ENCODE measurements at regions of chr12 and their contacts with region 1.

Region 1: DNA sequence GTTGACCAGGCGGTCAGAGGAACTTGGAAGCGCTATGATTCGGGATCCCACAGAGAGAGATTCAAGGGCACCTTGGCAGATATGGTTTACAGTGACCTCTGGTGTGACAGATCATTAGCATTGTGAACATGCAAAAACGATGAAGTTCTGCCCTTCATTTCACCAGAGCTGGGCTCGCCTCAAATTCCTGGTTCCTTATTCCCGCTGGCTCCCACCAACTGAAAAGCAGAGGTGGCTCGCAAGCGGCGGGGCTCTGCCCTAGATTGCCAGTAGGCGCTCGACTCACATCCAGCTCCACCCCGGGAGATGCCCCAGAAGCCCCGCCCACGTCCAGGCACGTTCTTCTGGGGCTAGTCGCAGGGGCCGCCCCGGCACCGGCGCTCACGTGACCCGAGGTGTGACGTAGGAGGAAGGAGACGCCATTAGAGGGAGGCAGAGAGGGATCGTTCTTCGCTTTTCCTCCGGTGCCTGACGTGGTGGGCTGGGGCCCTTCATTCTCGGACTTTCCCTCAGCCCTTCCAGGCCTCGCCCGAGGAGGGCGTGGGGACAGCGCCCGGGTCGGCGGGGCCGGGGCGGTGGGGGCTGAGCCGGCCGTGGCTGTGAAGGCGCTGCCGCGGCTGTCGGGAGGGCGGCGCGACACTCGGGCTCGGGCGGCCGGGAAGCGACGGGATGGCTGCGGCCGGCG is at the start of gene RAB21:
- DNase-seq: peak; percentile 99
- H3K4me3 ChIP-seq: peak within 1 kb of the TSS; percentile 76 to 93 (median 84)
- H3K27ac ChIP-seq: peak within 1 kb of the TSS; percentile 93 to 99 (median 96)
- H3K4me1 ChIP-seq: peaks cover 9 to 42% (median 37%) of the 10 kb centered on the region in 4 donors
- H3K27me3 ChIP-seq: peaks cover 0 to 3% (median 0%) of the 10 kb centered on the region in 4 donors
- CTCF ChIP-seq: peak; percentile 29 to 51 (median 29)
- EP300 ChIP-seq: no peak
- POLR2A ChIP-seq: peak; percentile 93
- total RNA-seq, gene RAB21: 15.0 to 36.9 (median 31.7) TPM

Region 2: GRCh38 chr12:71465796-71466195 is 288.8 kb before region 1 on chr12:
- intact Hi-C with region 1: no loop called
- DNase-seq: no peak
- H3K4me3 ChIP-seq: no peak overlapping the region
- H3K27ac ChIP-seq: no peak overlapping the region
- H3K4me1 ChIP-seq: no peaks in the 10 kb centered on the region
- H3K27me3 ChIP-seq: no peaks in the 10 kb centered on the region
- CTCF ChIP-seq: no peak
- EP300 ChIP-seq: no peak
- POLR2A ChIP-seq: no peak

Region 3: DNA sequence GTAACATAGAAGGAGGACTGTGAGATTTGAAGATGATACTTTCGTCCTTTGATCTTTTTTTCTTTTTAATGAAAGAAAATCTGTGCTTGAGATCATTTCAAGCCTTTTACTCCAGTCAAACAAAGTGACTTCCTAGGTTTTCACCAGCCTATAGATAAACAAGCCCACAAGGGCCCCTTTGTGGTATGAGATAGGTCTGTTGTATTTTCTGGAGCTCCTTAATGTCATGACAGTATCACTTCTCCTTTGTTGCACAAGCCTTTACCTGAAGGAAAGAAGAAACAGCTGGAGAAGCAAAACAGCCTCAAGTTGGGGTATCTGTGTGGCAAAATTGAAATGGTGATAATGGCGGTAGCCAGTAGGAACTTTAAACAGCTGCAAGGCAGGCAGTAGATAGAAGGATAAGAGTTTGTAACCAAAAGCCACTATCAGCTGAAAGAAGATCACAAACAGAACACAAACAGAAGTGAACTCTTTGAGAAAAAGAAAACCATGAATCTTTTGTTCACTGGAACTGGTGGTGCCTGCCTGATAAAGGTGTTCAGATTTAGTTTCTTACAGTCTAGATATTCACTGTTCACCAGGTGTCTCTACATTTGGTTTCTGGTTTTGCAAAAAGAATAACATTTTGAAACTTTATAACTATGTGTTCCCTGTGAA is 218.2 kb before region 1 on chr12:
- intact Hi-C with region 1: no loop called
- DNase-seq: no peak
- H3K4me3 ChIP-seq: no peak overlapping the region
- H3K27ac ChIP-seq: no peak overlapping the region
- H3K4me1 ChIP-seq: no peaks in the 10 kb centered on the region
- H3K27me3 ChIP-seq: no peaks in the 10 kb centered on the region
- CTCF ChIP-seq: no peak
- EP300 ChIP-seq: no peak
- POLR2A ChIP-seq: no peak

Region 4: GRCh38 chr12:71626098-71626497 is 128.5 kb before region 1 on chr12:
- intact Hi-C with region 1: no loop called
- DNase-seq: no peak
- H3K4me3 ChIP-seq: no peak overlapping the region
- H3K27ac ChIP-seq: no peak overlapping the region
- H3K4me1 ChIP-seq: no peaks in the 10 kb centered on the region
- H3K27me3 ChIP-seq: no peaks in the 10 kb centered on the region
- CTCF ChIP-seq: no peak
- EP300 ChIP-seq: no peak
- POLR2A ChIP-seq: no peak

Region 5: DNA sequence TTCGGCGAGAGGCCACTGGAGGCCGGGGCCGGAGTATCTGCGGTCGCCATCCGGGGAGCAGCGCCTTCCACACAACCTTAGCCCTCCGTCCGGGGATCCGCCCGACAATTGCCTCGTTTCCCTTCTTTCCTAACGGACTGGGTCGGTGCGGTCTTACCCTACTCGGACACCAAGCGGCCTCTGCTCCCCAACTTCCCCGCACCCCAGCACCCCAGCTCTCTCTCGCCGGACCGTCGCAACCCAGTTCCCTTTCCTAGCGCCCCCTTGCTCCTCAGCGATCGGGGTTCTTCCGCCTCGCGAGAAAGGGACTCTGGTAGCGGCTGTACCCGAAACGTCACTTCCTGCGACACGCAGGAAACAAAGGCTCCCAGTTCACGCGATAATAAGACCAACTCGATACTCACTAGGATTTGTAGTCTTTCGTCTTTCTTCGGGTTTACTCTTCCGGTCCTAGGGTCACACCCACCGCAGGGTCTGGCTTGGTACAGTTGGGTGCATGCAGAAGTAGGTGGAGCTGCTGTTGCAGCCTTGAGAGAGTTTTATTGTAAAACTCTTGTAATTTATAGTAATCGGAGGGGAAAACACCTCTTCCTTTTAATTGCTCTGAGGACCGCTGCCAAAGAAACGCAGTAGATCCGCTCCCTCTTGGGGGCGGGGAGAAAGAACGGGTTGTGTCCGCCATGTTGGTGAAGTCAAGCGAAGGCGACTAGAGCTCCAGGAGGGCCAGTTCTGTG is 90.9 kb before region 1 on chr12 and contains the start of gene ZFC3H1:
- intact Hi-C with region 1: loop called (anchors 10 kb)
- DNase-seq: peak; percentile 97
- H3K4me3 ChIP-seq: peak within 1 kb of the TSS; percentile 77 to 87 (median 82)
- H3K27ac ChIP-seq: peak within 1 kb of the TSS; percentile 94 to 96 (median 95)
- H3K4me1 ChIP-seq: peaks cover 22 to 46% (median 36%) of the 10 kb centered on the region in 4 donors
- H3K27me3 ChIP-seq: no peaks in the 10 kb centered on the region
- CTCF ChIP-seq: peak in 2 of 3 experiments; percentile 14 to 23
- EP300 ChIP-seq: no peak
- POLR2A ChIP-seq: peak; percentile 90
- total RNA-seq, gene ZFC3H1: 19.4 to 44.0 (median 25.9) TPM

Region 6: DNA sequence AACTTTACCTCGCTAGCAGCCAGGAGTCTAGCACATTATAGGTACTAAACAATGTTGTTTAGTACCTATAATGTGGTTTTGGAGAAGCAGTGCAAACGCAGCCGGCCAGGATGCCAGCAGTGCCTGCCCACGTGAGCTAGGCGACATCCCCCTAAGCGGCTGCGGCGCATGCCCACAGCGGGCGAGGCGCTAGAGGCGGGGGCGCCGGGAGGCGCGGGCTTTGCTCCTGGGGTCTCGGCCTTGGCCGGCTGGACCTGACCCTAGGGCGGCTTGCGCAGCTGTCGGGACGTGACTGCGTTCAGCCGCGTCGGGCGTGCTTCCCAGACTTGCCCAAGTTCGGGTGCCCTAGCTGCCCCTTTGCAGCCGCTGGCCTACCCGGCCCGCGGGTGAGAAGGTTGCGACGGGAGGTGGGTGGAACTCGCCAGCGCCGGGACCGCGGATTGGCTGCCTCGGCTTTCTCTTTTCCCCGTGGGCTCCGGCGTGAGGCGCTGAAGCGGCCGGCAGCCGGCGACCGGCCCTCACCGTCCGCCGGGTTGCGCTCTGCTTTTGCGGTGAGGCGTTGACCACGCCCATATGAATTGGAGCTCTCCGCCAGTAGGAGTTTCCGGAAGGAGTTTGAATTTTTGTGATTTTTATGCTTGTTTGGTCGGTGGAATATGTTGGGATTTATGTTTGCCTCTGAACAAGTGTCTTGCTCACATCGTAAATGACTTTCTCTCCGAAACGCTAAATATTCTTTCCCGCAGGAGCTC is 68.5 kb before region 1 on chr12 and contains the start of gene TMEM19:
- intact Hi-C with region 1: loop called (anchors 5 kb)
- DNase-seq: peak; percentile 97
- H3K4me3 ChIP-seq: peak within 1 kb of the TSS; percentile 79 to 84 (median 81)
- H3K27ac ChIP-seq: peak within 1 kb of the TSS; percentile 89 to 91 (median 90)
- H3K4me1 ChIP-seq: peaks cover 17 to 36% (median 34%) of the 10 kb centered on the region in 4 donors
- H3K27me3 ChIP-seq: no peaks in the 10 kb centered on the region
- CTCF ChIP-seq: peak in 2 of 3 experiments; percentile 3 to 31
- EP300 ChIP-seq: no peak
- POLR2A ChIP-seq: peak; percentile 29
- total RNA-seq, gene TMEM19: 9.6 to 24.2 (median 16.6) TPM

Region 7: DNA sequence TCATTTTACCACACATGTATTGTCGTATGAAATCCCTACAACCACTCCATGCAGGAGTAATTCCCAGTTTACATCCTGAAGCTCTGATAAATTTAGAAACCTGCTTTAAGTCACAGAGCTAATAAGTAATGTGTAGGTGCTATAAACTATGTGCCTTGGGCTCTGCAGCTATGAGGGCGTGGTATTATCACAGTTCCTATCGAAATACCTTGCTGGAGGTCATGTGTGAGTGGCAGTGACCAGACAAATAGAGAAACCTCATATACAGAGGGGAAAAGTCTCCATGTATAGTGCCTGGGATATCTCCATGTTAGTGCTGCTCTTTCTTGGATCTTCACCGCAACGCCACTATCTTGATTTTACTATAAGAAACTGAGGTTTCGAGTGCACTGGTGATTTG is 84.1 kb after region 1 on chr12:
- intact Hi-C with region 1: loop called (anchors 5 kb)
- DNase-seq: no peak
- H3K4me3 ChIP-seq: peak overlapping the region; percentile 60 to 95 (median 74)
- H3K27ac ChIP-seq: peak overlapping the region; percentile 90 to 98 (median 94)
- H3K4me1 ChIP-seq: peaks cover 17 to 42% (median 41%) of the 10 kb centered on the region in 4 donors
- H3K27me3 ChIP-seq: peaks cover 0 to 12% (median 2%) of the 10 kb centered on the region in 4 donors
- CTCF ChIP-seq: no peak
- EP300 ChIP-seq: no peak
- POLR2A ChIP-seq: no peak

Measured in esophagus muscularis mucosa (tissue), 4 donors.